AG04449 (cell line): ENCODE measurements at regions of chr1 and their contacts with region 1.

Region 1: DNA sequence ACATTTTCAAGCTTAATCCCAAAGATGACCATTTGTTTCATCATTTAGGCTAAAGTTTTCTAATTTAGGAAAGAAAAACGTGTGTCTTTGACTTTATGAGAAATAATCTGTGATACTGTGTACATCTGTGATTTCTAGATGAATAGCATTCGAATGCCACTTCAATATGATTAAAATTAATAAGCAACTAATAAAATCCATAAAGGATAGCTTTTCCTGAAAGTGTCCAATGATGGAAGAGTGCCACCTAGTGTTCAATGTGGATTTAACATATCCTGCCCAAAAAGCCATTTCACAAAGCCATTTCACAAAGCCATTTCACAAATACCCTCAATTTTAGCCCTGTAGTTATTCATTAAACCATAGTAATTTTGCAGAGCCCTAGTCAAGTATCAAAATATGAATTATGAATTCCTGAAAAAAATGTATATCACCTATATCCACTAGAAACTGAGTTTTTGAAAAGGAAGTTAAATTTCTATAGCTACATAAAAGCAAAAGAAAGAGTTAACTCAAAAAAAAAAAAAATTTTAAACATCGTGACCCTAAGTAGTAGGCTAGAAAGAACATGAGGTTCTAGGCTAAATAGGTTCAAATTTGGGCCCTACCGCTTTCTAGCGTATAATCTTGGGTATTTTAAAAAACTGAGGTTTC is 19.1 kb downstream of the NME7 start:
- DNase-seq: no peak
- H3K4me3 ChIP-seq: no peak overlapping the region
- CTCF ChIP-seq: peak; percentile 53

Region 2: DNA sequence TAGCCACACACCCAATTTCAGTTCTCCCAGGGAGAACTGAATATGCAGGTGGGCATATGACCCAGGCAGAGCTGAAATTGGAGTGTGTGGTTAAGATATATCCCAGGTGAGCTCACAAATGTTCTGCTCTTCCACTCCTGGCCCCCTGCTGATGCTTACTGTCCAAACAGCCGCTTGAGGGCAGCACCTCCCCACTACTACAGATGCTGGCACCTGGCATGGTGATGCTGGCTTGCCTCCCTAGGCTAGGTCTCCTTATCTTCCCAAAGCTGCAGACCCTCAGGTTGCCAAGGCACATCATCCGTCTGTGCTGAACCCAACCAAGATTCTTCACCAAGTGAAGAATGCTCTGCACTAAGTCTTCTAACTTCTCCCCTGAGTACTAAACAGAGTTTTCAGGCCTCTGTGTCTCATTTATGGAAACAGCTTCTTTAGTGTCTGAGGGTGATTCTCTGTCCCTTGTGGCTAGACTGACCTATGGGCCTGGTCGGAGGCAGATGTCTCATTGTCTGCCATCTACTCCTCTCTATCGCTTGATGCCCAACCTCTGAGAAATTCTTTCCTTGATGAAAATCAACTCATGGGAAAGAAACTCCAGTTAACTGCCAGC is 744.9 kb before region 1 on chr1:
- CTCF ChIA-PET with region 1: interaction called, 122 read pairs
- POLR2A ChIA-PET with region 1: no interaction called
- DNase-seq: no peak
- H3K4me3 ChIP-seq: no peak overlapping the region
- CTCF ChIP-seq: peak; percentile 87

Region 3: DNA sequence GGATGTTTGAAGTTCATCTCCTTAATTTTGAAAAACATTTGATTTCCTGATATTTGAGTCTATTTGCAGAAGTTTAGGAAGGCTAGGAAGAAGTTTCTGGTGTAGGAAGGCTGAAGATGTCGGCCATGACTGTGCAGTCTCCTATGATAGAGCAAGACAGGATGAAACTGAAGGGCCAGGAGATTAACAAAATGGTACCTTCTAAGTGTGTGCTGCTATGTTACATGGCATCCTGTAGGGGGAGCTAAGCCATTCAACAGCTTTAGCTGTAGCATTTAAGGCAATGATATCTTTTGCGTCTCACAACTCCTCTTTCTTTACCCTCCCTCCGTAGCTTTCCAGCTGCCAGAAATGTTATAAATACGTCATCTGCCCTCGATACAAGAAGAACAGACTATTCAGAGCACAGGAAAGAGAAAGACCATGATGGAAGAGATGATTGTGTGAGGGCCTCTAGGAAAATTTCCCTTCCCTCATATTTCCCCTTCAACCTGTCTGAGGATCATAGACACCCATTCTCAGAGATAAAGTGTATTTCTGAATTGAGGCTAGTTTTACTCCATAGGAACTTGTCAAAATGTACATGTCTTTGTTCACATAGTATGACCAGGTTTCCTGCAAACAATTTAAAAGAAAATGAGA is 711.0 kb before region 1 on chr1:
- CTCF ChIA-PET with region 1: interaction called, 15 read pairs
- POLR2A ChIA-PET with region 1: no interaction called
- DNase-seq: no peak
- H3K4me3 ChIP-seq: no peak overlapping the region
- CTCF ChIP-seq: peak; percentile 46

Region 4: DNA sequence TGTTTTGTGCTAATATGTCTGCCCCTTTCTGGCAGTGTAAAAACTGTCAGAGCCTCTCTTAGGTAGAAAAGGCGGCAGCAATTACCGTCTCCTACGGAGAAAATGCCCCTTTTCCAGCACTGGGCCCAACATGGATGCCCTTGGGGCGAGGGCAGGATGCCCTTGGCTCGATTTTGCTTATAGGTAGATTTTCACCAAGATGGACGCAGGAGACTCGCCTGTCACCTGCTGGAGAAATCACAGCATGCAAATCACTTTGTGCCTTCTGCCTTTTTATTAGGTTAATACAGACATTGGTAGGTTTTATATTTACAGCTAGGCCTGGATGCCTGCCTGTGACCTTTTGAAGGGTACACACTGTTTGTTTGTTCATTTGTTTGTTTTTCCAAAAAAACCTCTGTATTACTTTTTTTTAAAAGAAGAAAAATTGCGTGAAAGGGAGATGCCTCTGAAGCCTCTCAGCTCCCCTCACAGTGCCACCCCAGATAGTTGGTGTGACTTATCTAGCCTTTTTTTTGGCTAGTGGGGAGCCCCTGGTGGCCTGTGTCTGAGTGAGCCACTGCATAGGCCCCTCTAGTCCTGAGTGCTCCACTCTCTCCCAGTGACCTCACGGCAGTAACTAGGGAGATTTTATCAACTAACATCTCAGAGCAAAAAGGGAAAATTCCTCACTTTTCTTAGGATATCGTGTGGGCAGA is 239.5 kb before region 1 on chr1:
- CTCF ChIA-PET with region 1: interaction called, 16 read pairs
- POLR2A ChIA-PET with region 1: no interaction called
- DNase-seq: no peak
- H3K4me3 ChIP-seq: no peak overlapping the region
- CTCF ChIP-seq: peak; percentile 3

Region 5: DNA sequence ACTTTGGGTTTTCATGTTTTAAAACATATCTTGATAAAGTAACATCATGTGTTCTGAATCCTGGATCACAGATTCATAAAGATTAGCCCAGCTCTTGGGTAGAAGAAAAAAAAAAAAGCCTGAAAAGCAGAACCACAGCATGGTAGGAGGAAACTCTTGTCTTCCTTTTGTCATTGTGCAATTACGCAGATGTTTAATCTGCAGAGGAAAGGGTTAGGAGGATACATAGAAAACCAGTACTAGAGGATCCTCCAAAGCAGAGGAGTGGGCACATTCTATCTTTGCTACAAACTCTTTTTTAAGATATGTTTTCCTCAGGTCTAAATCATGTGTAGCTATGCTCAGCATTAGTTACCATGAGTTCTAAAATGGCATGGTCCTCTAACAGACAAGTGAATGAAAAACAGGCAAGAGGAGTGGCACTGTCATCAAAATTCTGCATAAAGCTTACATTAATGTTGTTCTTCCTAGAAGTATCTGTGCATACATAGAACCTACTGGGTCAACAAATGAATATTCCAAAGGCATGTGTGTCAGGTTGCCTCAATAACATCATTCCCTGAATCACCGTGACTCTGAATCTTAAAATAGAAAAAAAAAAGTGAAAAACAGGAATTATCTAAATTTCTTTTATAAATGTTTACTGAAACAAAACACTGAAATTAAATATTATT is 87.9 kb before region 1 on chr1:
- CTCF ChIA-PET with region 1: no interaction called
- POLR2A ChIA-PET with region 1: no interaction called
- DNase-seq: no peak
- H3K4me3 ChIP-seq: no peak overlapping the region
- CTCF ChIP-seq: no peak

Region 6: GRCh38 chr1:169367486-169368405 is 19.2 kb after region 1 on chr1 and contains the starts of genes BLZF1 and NME7:
- CTCF ChIA-PET with region 1: interaction called, 33 read pairs
- POLR2A ChIA-PET with region 1: no interaction called
- DNase-seq: peak; percentile 74
- H3K4me3 ChIP-seq: peak within 1 kb of the TSS; percentile 87
- CTCF ChIP-seq: no peak